ENCODE measurements at regions of chr10 and their contacts with region 1.

Region 1: DNA sequence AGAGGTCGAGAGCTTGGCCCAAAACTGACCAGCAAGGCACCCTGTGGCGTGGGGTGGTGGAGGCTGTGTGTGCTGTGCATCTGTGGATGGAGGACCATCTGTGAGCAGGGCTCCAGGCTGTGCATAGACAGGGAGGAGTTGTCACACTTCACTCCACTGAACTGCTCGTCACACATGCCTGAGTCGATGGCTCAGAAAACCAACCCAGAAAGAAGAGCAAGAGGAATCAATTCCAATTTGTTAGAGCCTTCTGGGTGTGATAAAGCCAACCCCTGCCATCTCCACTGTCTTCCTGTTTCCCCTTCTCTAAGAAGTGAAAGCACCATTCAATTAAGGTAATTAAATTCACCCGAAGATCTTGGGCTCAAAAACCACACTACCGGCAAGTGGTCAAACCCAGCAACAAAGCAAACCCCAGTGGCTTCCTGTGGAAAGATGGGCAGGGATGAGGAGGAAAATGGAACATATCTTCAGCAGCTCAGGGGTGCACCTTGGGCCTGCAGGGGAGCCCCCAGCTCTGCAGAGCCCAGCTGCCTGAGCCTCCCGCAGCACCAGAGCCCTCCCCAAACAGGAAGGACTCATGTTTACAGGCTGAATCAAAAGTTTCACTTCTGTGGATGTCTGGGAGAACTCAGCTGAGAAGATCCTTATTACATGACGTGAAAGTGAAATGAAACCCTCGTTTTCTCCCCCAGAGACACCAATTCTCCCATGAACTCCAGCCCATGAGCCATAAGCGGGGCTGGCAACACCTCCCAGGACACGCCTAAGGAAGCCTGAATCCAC is 10.8 kb downstream of the C10orf71 start:
- DNase-seq: peak in 2 of 3 donors; percentile 22 to 35
- H3K4me3 ChIP-seq: peak overlapping the region in 2 of 3 experiments; percentile 16 to 47
- H3K4me3 Mint-ChIP-seq: peak overlapping the region; percentile 52 to 56
- H3K27ac ChIP-seq: peak overlapping the region; percentile 95 to 96
- H3K27ac Mint-ChIP-seq: peak overlapping the region; percentile 89 to 96 (median 94)
- H3K4me1 ChIP-seq: peaks cover 39 to 45% of the 10 kb centered on the region in 2 donors
- H3K4me1 Mint-ChIP-seq: peaks cover 56% of the 10 kb centered on the region
- H3K27me3 ChIP-seq: no peaks in the 10 kb centered on the region
- H3K27me3 Mint-ChIP-seq: peaks cover 2 to 7% (median 3%) of the 10 kb centered on the region in 3 donors
- CTCF ChIP-seq: no peak

Region 2: GRCh38 chr10:49187950-49188761 is 121.7 kb before region 1 on chr10 and contains the start of gene TMEM273:
- intact Hi-C with region 1: loop called in 1 of 2 experiments (anchors 5 kb)
- DNase-seq: peak; percentile 88 to 95 (median 93)
- H3K4me3 ChIP-seq: peak within 1 kb of the TSS; percentile 0 to 63 (median 32)
- H3K4me3 Mint-ChIP-seq: peak within 1 kb of the TSS; percentile 59 to 76
- H3K27ac ChIP-seq: peak within 1 kb of the TSS; percentile 85 to 90
- H3K27ac Mint-ChIP-seq: peak within 1 kb of the TSS; percentile 92 to 98 (median 96)
- H3K4me1 ChIP-seq: peaks cover 72 to 75% of the 10 kb centered on the region in 2 donors
- H3K4me1 Mint-ChIP-seq: peaks cover 74% of the 10 kb centered on the region
- H3K27me3 ChIP-seq: no peaks in the 10 kb centered on the region
- H3K27me3 Mint-ChIP-seq: peaks cover 0 to 2% (median 0%) of the 10 kb centered on the region in 3 donors
- CTCF ChIP-seq: no peak
- polyA plus RNA-seq, gene TMEM273: 6.7 to 7.9 (median 6.9) TPM

Region 3: GRCh38 chr10:49264177-49264677 is 45.6 kb before region 1 on chr10:
- intact Hi-C with region 1: loop called in 1 of 2 experiments (anchors 5 kb)
- DNase-seq: no peak
- H3K4me3 ChIP-seq: no peak overlapping the region
- H3K4me3 Mint-ChIP-seq: no peak overlapping the region
- H3K27ac ChIP-seq: no peak overlapping the region
- H3K27ac Mint-ChIP-seq: no peak overlapping the region
- H3K4me1 ChIP-seq: no peaks in the 10 kb centered on the region
- H3K4me1 Mint-ChIP-seq: no peaks in the 10 kb centered on the region
- H3K27me3 ChIP-seq: no peaks in the 10 kb centered on the region
- H3K27me3 Mint-ChIP-seq: peaks cover 0 to 6% (median 6%) of the 10 kb centered on the region in 3 donors
- CTCF ChIP-seq: no peak

Region 4: DNA sequence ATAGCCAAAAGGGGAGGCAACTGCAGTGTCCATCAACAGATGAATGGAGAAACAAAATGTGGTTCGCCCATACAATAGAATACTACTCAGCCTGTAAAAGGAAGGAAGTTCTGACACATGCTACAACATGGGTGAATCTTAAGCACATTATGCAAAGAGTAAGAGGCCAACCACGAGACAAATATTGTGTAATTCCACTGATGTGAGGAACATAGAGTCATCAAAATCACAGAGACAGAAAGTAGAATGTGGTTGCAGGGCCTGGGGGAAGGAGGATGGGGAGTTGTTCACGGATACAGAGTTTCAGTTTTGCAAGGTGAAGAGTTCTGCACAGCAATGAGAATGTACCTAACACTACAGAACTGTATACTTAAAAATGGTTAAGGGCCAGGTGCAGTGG is 24.6 kb before region 1 on chr10:
- intact Hi-C with region 1: loop called in 1 of 2 experiments (anchors 1 kb)
- DNase-seq: peak; percentile 95 to 99 (median 99)
- H3K4me3 ChIP-seq: peak overlapping the region in 1 of 3 experiments; percentile 54
- H3K4me3 Mint-ChIP-seq: peak overlapping the region; percentile 69 to 85
- H3K27ac ChIP-seq: peak overlapping the region; percentile 75 to 92
- H3K27ac Mint-ChIP-seq: peak overlapping the region; percentile 96 to 100 (median 98)
- H3K4me1 ChIP-seq: peaks cover 62 to 67% of the 10 kb centered on the region in 2 donors
- H3K4me1 Mint-ChIP-seq: peaks cover 52% of the 10 kb centered on the region
- H3K27me3 ChIP-seq: no peaks in the 10 kb centered on the region
- H3K27me3 Mint-ChIP-seq: peaks cover 0 to 5% (median 2%) of the 10 kb centered on the region in 3 donors
- CTCF ChIP-seq: no peak

Region 5: DNA sequence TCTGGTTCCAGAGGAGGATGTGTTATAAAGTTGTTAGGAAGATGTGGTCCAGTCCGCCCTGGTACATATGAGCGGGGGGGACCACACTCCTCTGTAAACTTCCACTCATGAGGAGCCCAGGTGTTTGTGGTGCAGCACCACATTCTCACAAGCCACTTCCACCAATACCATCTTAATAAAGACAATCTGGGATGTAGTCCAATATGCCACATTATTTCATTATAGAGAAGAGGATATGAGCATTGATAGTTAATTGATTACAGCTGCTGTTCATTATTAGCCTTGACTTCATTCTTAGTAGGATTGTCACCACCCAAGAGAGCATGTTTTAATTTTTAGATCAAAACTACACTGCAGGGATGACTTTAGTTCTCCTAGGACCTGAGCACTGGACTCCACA is 188.6 kb after region 1 on chr10:
- intact Hi-C with region 1: no loop called
- DNase-seq: no peak
- H3K4me3 ChIP-seq: no peak overlapping the region
- H3K4me3 Mint-ChIP-seq: no peak overlapping the region
- H3K27ac ChIP-seq: no peak overlapping the region
- H3K27ac Mint-ChIP-seq: no peak overlapping the region
- H3K4me1 ChIP-seq: no peaks in the 10 kb centered on the region
- H3K4me1 Mint-ChIP-seq: no peaks in the 10 kb centered on the region
- H3K27me3 ChIP-seq: no peaks in the 10 kb centered on the region
- H3K27me3 Mint-ChIP-seq: peaks cover 0 to 2% (median 0%) of the 10 kb centered on the region in 3 donors
- CTCF ChIP-seq: no peak

Measured in CD14-positive monocyte (primary cell).